Common myeloid progenitor, CD34-positive (primary cell): ENCODE measurements at regions of chr3 and their contacts with region 1.

Region 1: DNA sequence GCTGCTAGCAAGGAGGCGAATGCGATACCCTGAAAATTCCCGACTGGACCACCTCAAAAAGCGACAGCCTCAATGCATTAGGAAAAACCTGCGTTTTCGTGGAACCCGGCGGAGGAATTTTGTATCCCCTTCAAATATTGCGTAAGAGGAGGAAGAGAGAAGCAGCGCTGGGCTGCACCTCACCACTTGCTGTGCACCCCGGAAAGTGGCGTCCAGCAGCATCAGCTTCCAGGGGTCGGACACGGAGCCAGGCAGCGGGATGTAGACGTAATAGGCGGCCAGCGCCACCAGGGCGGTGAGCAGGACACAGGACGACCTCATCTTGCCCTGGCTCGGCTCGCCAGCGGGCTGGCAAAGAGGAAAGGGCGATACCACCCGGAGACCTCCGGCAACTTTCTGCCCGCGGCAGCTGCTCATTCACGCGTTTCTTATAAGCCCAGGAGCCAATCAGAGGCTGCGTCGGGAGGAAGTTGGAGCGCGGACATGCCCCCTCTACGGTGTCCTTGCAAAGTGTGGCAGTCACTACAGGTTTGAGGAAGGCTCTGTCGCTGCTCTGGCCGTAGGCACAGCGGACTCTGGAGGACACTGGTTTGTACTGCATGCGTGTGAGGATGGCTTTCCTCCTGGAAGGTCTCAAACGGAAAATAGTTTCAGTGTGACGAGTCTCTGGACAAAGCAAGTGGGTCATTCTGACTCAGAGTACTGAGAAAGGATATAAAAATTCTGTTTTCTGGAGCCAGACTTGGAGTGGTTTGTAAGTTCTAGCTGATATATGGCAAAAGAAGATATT is at the start of gene NCEH1:
- DNase-seq: peak; percentile 95 to 97 (median 95)
- H3K4me3 ChIP-seq: peak within 1 kb of the TSS; percentile 89 to 100 (median 96)
- H3K27ac ChIP-seq: peak within 1 kb of the TSS in 1 of 2 experiments; percentile 80
- H3K4me1 ChIP-seq: peaks cover 10 to 30% (median 19%) of the 10 kb centered on the region in 4 experiments
- H3K27me3 ChIP-seq: no peaks in the 10 kb centered on the region

Region 2: GRCh38 chr3:172550347-172550943 is 160.4 kb before region 1 on chr3:
- CTCF ChIA-PET with region 1: no interaction called
- POLR2A ChIA-PET with region 1: no interaction called
- DNase-seq: peak in 2 of 3 donors; percentile 87 to 93
- H3K4me3 ChIP-seq: no peak overlapping the region
- H3K27ac ChIP-seq: no peak overlapping the region
- H3K4me1 ChIP-seq: peaks cover 5 to 21% (median 13%) of the 10 kb centered on the region in 4 experiments
- H3K27me3 ChIP-seq: no peaks in the 10 kb centered on the region

Region 3: DNA sequence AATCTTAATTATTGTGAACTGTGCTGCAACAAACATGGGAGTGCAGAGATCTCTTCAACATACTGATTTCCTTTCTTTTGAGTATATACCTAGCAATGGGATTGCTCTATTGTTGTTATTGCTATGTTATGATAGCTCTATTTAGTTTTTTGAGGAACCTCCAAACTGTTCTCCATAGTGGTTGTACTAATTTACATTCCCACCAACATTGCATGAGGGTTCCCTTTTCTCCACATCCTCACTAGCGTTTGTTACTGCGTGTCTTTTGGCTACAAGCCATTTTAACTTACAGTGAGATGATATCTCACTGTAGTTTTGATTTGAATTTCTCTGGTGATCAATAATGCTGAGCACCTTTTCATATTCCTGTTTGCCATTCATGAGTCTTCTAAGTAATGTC is 142.2 kb before region 1 on chr3:
- CTCF ChIA-PET with region 1: no interaction called
- POLR2A ChIA-PET with region 1: no interaction called
- DNase-seq: peak in 2 of 3 donors; percentile 55 to 58
- H3K4me3 ChIP-seq: no peak overlapping the region
- H3K27ac ChIP-seq: no peak overlapping the region
- H3K4me1 ChIP-seq: peaks cover 1 to 20% (median 6%) of the 10 kb centered on the region in 4 experiments
- H3K27me3 ChIP-seq: no peaks in the 10 kb centered on the region

Region 4: DNA sequence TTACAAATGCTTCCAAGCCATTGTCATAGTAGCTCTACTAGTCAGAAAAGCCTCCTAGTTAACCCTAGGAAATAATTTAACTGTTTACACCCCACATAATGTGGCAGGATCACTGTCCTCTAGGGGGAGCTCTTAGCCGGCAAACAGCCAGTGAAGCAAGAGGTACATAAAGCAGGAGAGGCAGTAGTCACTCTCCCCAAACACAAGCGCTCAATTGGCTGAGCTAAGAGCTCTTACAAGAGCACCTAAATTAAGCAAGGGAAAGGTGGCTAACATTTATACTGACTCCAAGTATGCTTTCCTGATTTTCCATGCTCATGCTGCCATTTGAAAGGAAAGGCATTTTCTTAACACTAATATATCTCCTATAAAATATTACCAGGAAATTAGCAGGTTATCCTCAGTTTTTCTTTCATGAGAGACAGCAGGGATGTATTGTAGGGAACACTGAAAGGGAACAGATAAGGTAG is 37.6 kb before region 1 on chr3:
- CTCF ChIA-PET with region 1: interaction called, 20 read pairs
- POLR2A ChIA-PET with region 1: no interaction called
- DNase-seq: peak; percentile 58 to 83 (median 79)
- H3K4me3 ChIP-seq: no peak overlapping the region
- H3K27ac ChIP-seq: no peak overlapping the region
- H3K4me1 ChIP-seq: peaks cover 0 to 16% (median 7%) of the 10 kb centered on the region in 4 experiments
- H3K27me3 ChIP-seq: no peaks in the 10 kb centered on the region